A549 (cell line): ENCODE measurements at regions of chr9 and their contacts with region 1.

Region 1: GRCh38 chr9:90914868-90915483 is 113.4 kb downstream of the SYK start:
- DNase-seq: peak; percentile 79 to 87
- ATAC-seq: peak; percentile 89 to 99
- H3K4me3 ChIP-seq: no peak overlapping the region
- H3K27ac ChIP-seq: no peak overlapping the region
- H3K4me1 ChIP-seq: no peaks in the 10 kb centered on the region
- CTCF ChIP-seq: peak; percentile 83
- EP300 ChIP-seq: no peak
- POLR2A ChIP-seq: no peak
- RAD21 ChIP-seq: peak; percentile 95

Region 2: GRCh38 chr9:90722071-90722470 is 192.9 kb before region 1 on chr9:
- CTCF ChIA-PET with region 1: no interaction called
- POLR2A ChIA-PET with region 1: no interaction called
- DNase-seq: no peak
- ATAC-seq: no peak
- H3K4me3 ChIP-seq: no peak overlapping the region
- H3K27ac ChIP-seq: no peak overlapping the region
- H3K4me1 ChIP-seq: no peaks in the 10 kb centered on the region
- CTCF ChIP-seq: no peak
- EP300 ChIP-seq: no peak
- POLR2A ChIP-seq: no peak
- RAD21 ChIP-seq: no peak

Region 3: GRCh38 chr9:90868555-90868954 is 46.4 kb before region 1 on chr9:
- CTCF ChIA-PET with region 1: no interaction called
- POLR2A ChIA-PET with region 1: no interaction called
- DNase-seq: no peak
- ATAC-seq: no peak
- H3K4me3 ChIP-seq: no peak overlapping the region
- H3K27ac ChIP-seq: no peak overlapping the region
- H3K4me1 ChIP-seq: no peaks in the 10 kb centered on the region
- CTCF ChIP-seq: no peak
- EP300 ChIP-seq: no peak
- POLR2A ChIP-seq: no peak
- RAD21 ChIP-seq: no peak

Region 4: DNA sequence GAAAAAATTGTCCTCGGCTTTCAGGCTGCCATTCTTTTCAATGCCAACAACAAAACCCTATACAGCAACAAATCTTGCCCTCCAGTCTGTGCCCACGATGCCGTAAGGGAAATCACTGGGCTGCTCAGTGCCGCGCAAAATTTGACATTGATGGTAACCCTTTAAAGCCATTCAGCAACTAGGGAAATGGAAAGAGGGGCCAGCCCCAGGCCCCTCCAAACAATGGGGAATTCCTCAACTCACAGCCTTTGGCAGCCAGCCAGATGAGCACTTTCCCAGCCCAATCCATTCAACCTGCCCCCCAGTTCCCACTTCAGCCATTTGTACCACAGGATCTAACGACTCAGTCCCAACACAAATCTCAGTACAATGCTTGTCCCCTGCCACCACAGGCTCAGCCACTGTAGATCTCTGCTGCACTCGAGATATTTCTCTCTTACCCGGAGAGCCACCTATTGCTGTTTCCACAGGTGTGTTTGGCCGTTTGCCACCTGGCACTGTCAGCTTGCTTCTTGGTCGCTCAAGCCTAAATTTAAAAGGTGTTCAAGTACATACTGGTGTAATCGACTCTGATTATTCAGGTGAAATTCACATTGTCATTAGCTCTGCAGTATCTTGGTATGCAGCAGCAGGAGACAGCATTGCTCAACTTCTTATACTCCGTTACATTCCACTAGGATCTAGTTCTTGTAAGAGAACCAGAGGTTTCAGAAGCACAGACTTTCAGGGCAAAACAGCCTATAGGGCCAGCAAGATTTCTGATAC is 10.1 kb before region 1 on chr9:
- CTCF ChIA-PET with region 1: interaction called, 27 read pairs
- POLR2A ChIA-PET with region 1: no interaction called
- DNase-seq: no peak
- ATAC-seq: no peak
- H3K4me3 ChIP-seq: no peak overlapping the region
- H3K27ac ChIP-seq: no peak overlapping the region
- H3K4me1 ChIP-seq: no peaks in the 10 kb centered on the region
- CTCF ChIP-seq: no peak
- EP300 ChIP-seq: no peak
- POLR2A ChIP-seq: no peak
- RAD21 ChIP-seq: no peak

Region 5: GRCh38 chr9:91029650-91030361 is 114.8 kb after region 1 on chr9:
- CTCF ChIA-PET with region 1: interaction called, 19 read pairs
- POLR2A ChIA-PET with region 1: no interaction called
- DNase-seq: no peak
- ATAC-seq: no peak
- H3K4me3 ChIP-seq: no peak overlapping the region
- H3K27ac ChIP-seq: no peak overlapping the region
- H3K4me1 ChIP-seq: no peaks in the 10 kb centered on the region
- CTCF ChIP-seq: no peak
- EP300 ChIP-seq: no peak
- POLR2A ChIP-seq: no peak
- RAD21 ChIP-seq: no peak

Region 6: GRCh38 chr9:91089405-91090129 is 174.6 kb after region 1 on chr9:
- CTCF ChIA-PET with region 1: interaction called, 13 read pairs
- POLR2A ChIA-PET with region 1: no interaction called
- DNase-seq: peak in 1 of 2 experiments; percentile 59
- ATAC-seq: peak; percentile 89 to 91
- H3K4me3 ChIP-seq: no peak overlapping the region
- H3K27ac ChIP-seq: peak overlapping the region in 1 of 2 experiments; percentile 51; a peak in 1 of 6 replicates
- H3K4me1 ChIP-seq: 0 out of 3 replicates have a peak, but pooled peaks cover 7% of the 10 kb centered on the region
- CTCF ChIP-seq: peak; percentile 59
- EP300 ChIP-seq: no peak
- POLR2A ChIP-seq: no peak
- RAD21 ChIP-seq: peak; percentile 76 to 80

Region 7: DNA sequence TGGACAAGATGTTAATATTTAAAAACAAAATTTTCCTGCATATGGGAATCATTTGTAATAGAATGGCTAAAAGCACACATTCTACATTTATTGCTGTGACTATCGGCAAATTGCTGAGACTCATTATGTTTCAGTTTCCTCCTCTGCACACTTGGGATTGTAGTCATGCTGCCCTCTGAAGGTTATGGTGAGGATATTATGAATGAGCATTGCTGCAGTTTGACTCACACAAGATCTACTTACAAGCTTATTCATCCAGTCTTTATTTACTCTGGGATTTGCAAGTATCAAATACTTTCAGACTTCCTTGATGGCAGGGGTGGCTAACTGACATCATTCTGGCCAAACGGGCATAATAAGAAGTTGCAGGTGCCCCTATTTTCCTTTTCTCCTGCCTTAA is 518.2 kb after region 1 on chr9:
- CTCF ChIA-PET with region 1: interaction called, 85 read pairs
- POLR2A ChIA-PET with region 1: no interaction called
- DNase-seq: peak; percentile 68 to 91
- ATAC-seq: peak; percentile 99
- H3K4me3 ChIP-seq: no peak overlapping the region
- H3K27ac ChIP-seq: peak overlapping the region; percentile 26 to 33; a peak in 3 of 6 replicates
- H3K4me1 ChIP-seq: peaks cover 14% of the 10 kb centered on the region
- CTCF ChIP-seq: peak; percentile 66
- EP300 ChIP-seq: 0 out of 5 replicates have a peak, but pooled peaks of 1 of the 2 experiments have one; percentile 25
- POLR2A ChIP-seq: no peak
- RAD21 ChIP-seq: peak; percentile 80 to 85

Region 8: DNA sequence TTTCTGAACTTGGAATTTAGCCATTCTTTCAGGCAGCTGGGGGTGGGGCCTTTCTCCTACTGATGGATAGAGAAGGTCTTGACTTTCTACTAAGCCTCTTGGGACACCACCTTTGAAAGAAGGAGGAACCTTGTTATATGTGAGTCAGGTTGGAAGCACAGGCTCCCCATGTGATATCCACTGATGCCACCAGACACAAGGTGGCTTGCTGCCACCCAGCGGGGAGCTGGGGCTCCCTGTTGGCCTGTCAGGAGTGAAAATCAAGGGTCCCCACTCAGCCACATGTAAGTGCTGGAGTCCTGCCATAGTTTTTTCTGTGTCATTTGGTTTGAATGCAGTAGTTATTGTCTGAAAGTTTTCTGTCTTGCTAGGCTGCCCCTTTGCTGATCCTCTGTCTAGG is 761.1 kb after region 1 on chr9:
- CTCF ChIA-PET with region 1: interaction called, 54 read pairs
- POLR2A ChIA-PET with region 1: no interaction called
- DNase-seq: peak in 1 of 2 experiments; percentile 60
- ATAC-seq: peak; percentile 90 to 92
- H3K4me3 ChIP-seq: no peak overlapping the region
- H3K27ac ChIP-seq: no peak overlapping the region
- H3K4me1 ChIP-seq: no peaks in the 10 kb centered on the region
- CTCF ChIP-seq: peak; percentile 58
- EP300 ChIP-seq: no peak
- POLR2A ChIP-seq: no peak
- RAD21 ChIP-seq: peak; percentile 76 to 78

Region 9: DNA sequence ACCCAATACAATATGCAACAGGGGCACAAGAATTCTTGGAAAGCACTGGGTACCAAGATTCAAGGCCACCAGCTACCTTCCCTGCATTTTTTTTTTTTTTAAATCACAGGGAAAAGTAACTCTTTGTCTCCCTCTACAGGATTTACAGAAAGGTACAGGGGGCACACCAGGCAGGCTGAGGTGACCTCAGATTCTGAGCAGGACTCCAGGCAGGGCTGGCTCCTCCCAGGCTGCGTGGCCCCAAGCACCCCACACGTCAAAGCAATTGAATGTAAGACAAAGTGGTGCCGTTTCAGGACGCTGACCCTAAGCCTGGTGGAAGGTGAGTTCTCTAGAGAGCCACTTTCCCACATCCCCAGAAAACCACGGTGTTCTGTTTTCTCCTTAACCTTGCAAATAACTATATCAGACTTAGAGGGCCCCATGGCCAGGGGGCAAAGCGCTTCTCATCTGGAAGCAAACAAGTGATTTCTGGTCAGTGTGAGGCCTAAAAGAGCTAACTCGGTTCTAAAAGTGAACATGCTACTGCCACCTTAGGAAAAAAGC is 812.4 kb after region 1 on chr9:
- CTCF ChIA-PET with region 1: interaction called, 155 read pairs
- POLR2A ChIA-PET with region 1: no interaction called
- DNase-seq: peak; percentile 55 to 80
- ATAC-seq: peak; percentile 92 to 97
- H3K4me3 ChIP-seq: no peak overlapping the region
- H3K27ac ChIP-seq: no peak overlapping the region
- H3K4me1 ChIP-seq: 0 out of 3 replicates have a peak, but pooled peaks cover 2% of the 10 kb centered on the region
- CTCF ChIP-seq: peak; percentile 59
- EP300 ChIP-seq: no peak
- POLR2A ChIP-seq: no peak
- RAD21 ChIP-seq: peak; percentile 65 to 66